ENCODE measurements at regions of chr5 and their contacts with region 1.

Region 1: GRCh38 chr5:114305402-114306211 is 56.3 kb upstream of the KCNN2 start:
- DNase-seq: peak; percentile 74
- ATAC-seq: peak; percentile 90
- H3K4me3 ChIP-seq: no peak overlapping the region
- H3K27ac ChIP-seq: peak overlapping the region; percentile 81
- H3K4me1 ChIP-seq: peaks cover 10% of the 10 kb centered on the region
- H3K27me3 ChIP-seq: no peaks in the 10 kb centered on the region
- CTCF ChIP-seq: peak; percentile 85
- POLR2A ChIP-seq: no peak
- RAD21 ChIP-seq: peak; percentile 84

Region 2: GRCh38 chr5:113806250-113806649 is 499.4 kb before region 1 on chr5:
- CTCF ChIA-PET with region 1: no interaction called
- POLR2A ChIA-PET with region 1: no interaction called
- dilution Hi-C with region 1: no loop called
- in situ Hi-C with region 1: no loop called
- intact Hi-C with region 1: loop called (anchors 5 kb)
- DNase-seq: peak; percentile 34
- ATAC-seq: peak; percentile 68
- H3K4me3 ChIP-seq: peak overlapping the region; percentile 22; the same call in 1 of the 2 replicates
- H3K27ac ChIP-seq: no peak overlapping the region
- H3K4me1 ChIP-seq: no peaks in the 10 kb centered on the region; the same call in 1 of the 2 replicates
- H3K27me3 ChIP-seq: no peaks in the 10 kb centered on the region
- CTCF ChIP-seq: peak; percentile 54
- POLR2A ChIP-seq: no peak
- RAD21 ChIP-seq: peak; percentile 44

Region 3: DNA sequence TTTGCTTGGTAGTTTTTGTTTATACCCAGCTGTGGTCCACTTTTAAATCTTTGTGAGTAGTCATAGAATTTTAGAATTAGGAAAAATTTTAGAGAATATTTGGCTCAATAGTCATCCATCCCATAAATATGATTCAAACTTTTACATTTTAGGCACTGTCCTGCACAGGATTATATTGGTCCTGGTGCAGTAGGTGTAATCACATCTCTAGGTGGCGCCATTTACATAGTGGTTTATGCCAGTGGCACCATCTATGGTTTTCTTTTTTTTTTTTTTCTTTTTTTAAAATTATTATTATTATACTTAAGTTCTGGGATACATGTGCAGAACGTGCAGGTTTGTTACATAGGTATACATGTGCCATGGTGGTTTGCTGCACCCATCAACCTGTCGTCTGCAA is 204.5 kb before region 1 on chr5:
- CTCF ChIA-PET with region 1: interaction called, 3 read pairs
- POLR2A ChIA-PET with region 1: no interaction called
- dilution Hi-C with region 1: no loop called
- in situ Hi-C with region 1: loop called (anchors 5 kb)
- intact Hi-C with region 1: loop called (anchors 1 kb)
- DNase-seq: peak; percentile 80
- ATAC-seq: peak; percentile 91
- H3K4me3 ChIP-seq: no peak overlapping the region
- H3K27ac ChIP-seq: no peak overlapping the region
- H3K4me1 ChIP-seq: no peaks in the 10 kb centered on the region
- H3K27me3 ChIP-seq: no peaks in the 10 kb centered on the region
- CTCF ChIP-seq: peak; percentile 82
- POLR2A ChIP-seq: no peak
- RAD21 ChIP-seq: peak; percentile 85

Region 4: GRCh38 chr5:114243281-114243988 is 62.2 kb before region 1 on chr5:
- CTCF ChIA-PET with region 1: no interaction called
- POLR2A ChIA-PET with region 1: no interaction called
- dilution Hi-C with region 1: no loop called
- in situ Hi-C with region 1: no loop called
- intact Hi-C with region 1: loop called (anchors 5 kb)
- DNase-seq: peak; percentile 97
- ATAC-seq: peak; percentile 89
- H3K4me3 ChIP-seq: peak overlapping the region; percentile 7; the same call in 1 of the 2 replicates
- H3K27ac ChIP-seq: peak overlapping the region; percentile 91
- H3K4me1 ChIP-seq: peaks cover 6% of the 10 kb centered on the region; the same call in 1 of the 2 replicates
- H3K27me3 ChIP-seq: no peaks in the 10 kb centered on the region
- CTCF ChIP-seq: no peak
- POLR2A ChIP-seq: no peak
- RAD21 ChIP-seq: no peak